ENCODE measurements at regions of chr1 and their contacts with region 1.

Region 1: GRCh38 chr1:244989813-244990212 is 125.5 kb upstream of the HNRNPU start:
- DNase-seq: no peak
- ATAC-seq: no peak
- H3K4me3 ChIP-seq: no peak overlapping the region
- H3K27ac ChIP-seq: no peak overlapping the region
- H3K4me1 ChIP-seq: peaks cover 0 to 7% (median 0%) of the 10 kb centered on the region in 12 donors
- H3K27me3 ChIP-seq: no peaks in the 10 kb centered on the region
- CTCF ChIP-seq: no peak
- POLR2A ChIP-seq: no peak

Region 2: GRCh38 chr1:244937099-244937498 is 52.7 kb before region 1 on chr1:
- intact Hi-C with region 1: loop called in 1 of 10 experiments (anchors 2 kb)
- DNase-seq: no peak
- ATAC-seq: no peak
- H3K4me3 ChIP-seq: no peak overlapping the region
- H3K27ac ChIP-seq: no peak overlapping the region
- H3K4me1 ChIP-seq: no peaks in the 10 kb centered on the region
- H3K27me3 ChIP-seq: no peaks in the 10 kb centered on the region
- CTCF ChIP-seq: no peak
- POLR2A ChIP-seq: no peak

Region 3: DNA sequence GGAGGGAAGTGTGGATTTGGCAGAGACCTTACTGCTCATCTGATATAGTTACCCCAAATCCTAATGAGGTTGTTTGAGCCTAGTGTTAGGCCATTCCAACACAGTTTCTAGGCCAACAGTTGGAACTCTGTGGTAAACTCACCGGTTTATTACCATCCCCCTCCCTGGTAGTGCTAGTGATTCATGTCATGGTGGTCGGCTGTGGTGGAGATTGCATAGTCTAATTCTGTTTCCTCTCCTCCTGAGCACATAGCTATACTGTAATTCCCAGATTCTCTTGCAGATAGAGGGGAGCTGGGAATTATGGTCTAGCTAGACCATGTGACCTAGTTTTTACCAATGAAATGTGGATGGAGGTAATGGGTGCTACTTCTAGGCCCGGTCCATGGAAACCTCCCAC is 41.2 kb after region 1 on chr1:
- intact Hi-C with region 1: loop called in 1 of 10 experiments (anchors 10 kb)
- DNase-seq: no peak
- ATAC-seq: no peak
- H3K4me3 ChIP-seq: no peak overlapping the region
- H3K27ac ChIP-seq: no peak overlapping the region
- H3K4me1 ChIP-seq: no peaks in the 10 kb centered on the region
- H3K27me3 ChIP-seq: no peaks in the 10 kb centered on the region
- CTCF ChIP-seq: no peak
- POLR2A ChIP-seq: no peak